A549 (cell line): ENCODE measurements at regions of chr1 and their contacts with region 1.

Region 1: GRCh38 chr1:52404116-52404986 is at the starts of genes ORC1 and PRPF38A:
- DNase-seq: peak; percentile 85 to 95
- ATAC-seq: peak; percentile 93 to 96
- H3K4me3 ChIP-seq: peak within 1 kb of the TSS; percentile 93
- H3K27ac ChIP-seq: peak within 1 kb of the TSS; percentile 93 to 94
- H3K4me1 ChIP-seq: peaks cover 21% of the 10 kb centered on the region; the same call in 2 of the 3 replicates
- CTCF ChIP-seq: no peak
- EP300 ChIP-seq: no peak
- POLR2A ChIP-seq: peak; percentile 48
- RAD21 ChIP-seq: no peak
- polyA plus RNA-seq, gene ORC1: 17.7 and 19.1 TPM in 2 replicates
- polyA plus RNA-seq, gene PRPF38A: 24.0 and 30.4 TPM in 2 replicates

Region 2: GRCh38 chr1:52424231-52424636 is 19.9 kb after region 1 on chr1:
- CTCF ChIA-PET with region 1: no interaction called
- POLR2A ChIA-PET with region 1: no interaction called
- DNase-seq: no peak
- ATAC-seq: peak; percentile 34 to 40; a peak in 2 of 6 replicates
- H3K4me3 ChIP-seq: no peak overlapping the region
- H3K27ac ChIP-seq: no peak overlapping the region
- H3K4me1 ChIP-seq: no peaks in the 10 kb centered on the region
- CTCF ChIP-seq: no peak
- EP300 ChIP-seq: no peak
- POLR2A ChIP-seq: no peak
- RAD21 ChIP-seq: no peak

Region 3: DNA sequence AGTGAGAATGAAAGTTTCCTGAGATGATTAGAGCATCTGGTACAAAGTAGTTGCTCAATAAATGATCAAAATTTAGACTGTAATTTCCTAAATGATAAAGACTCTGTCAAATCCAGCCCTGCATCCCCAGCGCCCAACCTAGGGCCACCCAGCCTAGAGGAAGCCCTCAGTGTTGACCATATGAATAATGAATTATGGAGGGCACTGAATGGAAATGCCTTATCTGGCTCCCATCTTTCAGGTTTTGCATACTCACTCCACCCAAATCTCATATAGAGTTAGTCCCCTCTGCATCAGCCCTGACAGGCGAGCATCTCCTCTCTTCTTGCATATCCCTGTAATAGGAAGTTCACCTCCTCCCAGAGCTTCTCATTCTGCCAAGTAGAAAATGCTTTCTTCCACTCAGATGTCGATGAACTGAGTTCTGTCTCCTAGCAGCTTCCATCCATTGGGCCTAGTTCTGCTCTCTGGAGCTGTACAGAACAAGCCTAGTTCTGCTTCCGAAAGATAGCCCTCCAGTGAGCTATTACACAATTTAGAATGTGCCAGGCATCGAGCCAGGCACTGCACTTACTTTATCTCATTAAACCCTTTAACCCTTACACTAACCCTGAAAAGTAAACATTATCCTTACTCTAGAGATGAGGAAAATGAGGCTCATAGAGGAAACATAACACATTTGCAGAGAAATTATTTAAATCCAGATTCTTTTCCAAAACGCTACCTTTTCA is 272.9 kb after region 1 on chr1:
- CTCF ChIA-PET with region 1: no interaction called
- POLR2A ChIA-PET with region 1: interaction called, 10 read pairs
- DNase-seq: no peak
- ATAC-seq: no peak
- H3K4me3 ChIP-seq: no peak overlapping the region
- H3K27ac ChIP-seq: no peak overlapping the region; a peak in 1 of 6 replicates
- H3K4me1 ChIP-seq: no peaks in the 10 kb centered on the region
- CTCF ChIP-seq: no peak
- EP300 ChIP-seq: no peak
- POLR2A ChIP-seq: no peak
- RAD21 ChIP-seq: no peak